T-cell (primary cell): ENCODE measurements at regions of chr11 and their contacts with region 1.

Region 1: DNA sequence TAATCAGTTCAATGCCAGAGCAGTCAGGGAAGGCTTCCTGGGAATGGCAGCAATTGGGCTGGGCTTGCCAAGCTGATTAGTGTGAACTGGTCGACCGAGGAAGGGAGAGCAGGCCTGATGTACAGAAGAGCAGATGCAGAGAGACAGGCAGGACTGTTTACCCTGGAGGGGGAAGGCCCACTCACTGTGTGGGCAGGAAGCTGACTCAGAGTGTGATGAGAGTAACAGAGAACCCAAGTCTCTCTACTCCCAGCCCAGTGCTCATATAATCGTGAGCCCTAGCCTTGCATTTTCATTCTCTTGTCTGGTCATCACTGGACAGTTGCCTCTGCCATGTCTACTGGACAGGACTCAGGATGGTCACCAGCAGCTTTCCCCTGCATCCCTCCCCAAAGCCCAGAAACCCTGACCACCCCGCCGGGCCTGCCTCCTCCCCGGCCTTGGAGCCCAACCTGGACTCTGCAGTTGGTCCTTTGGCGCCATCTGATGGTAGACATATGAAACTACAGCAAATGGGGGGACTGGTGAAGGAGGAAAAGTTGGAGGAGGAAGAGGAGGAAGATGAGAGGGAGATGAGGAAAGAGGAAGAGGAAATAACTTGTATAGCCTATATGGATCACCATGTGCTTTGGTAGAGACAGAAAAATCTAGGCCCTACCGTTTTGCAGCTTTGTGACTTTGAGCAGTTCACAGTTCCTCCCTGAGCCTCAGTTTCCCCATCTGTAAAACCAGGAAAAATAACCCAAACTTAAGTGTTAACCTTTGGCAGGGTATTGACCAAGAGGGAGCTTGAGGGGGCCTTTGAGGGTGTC is 43.4 kb upstream of the PRDM11 start:
- DNase-seq: peak in 34 of 35 experiments; percentile 21 to 83 (median 46)
- ATAC-seq: peak; percentile 89 to 99 (median 98)
- H3K4me3 ChIP-seq: peak overlapping the region in 1 of 2 donors; percentile 21
- H3K4me3 Mint-ChIP-seq: peak overlapping the region; percentile 4 to 77 (median 71)
- H3K27ac ChIP-seq: peak overlapping the region; percentile 58
- H3K27ac Mint-ChIP-seq: peak overlapping the region; percentile 18 to 56
- H3K4me1 ChIP-seq: peaks cover 0 to 18% of the 10 kb centered on the region in 2 experiments
- H3K4me1 Mint-ChIP-seq: peaks cover 12 to 32% (median 14%) of the 10 kb centered on the region in 3 donors
- H3K27me3 ChIP-seq: peaks cover 0 to 24% of the 10 kb centered on the region in 2 experiments
- H3K27me3 Mint-ChIP-seq: peaks cover 0 to 2% of the 10 kb centered on the region in 2 donors

Region 2: DNA sequence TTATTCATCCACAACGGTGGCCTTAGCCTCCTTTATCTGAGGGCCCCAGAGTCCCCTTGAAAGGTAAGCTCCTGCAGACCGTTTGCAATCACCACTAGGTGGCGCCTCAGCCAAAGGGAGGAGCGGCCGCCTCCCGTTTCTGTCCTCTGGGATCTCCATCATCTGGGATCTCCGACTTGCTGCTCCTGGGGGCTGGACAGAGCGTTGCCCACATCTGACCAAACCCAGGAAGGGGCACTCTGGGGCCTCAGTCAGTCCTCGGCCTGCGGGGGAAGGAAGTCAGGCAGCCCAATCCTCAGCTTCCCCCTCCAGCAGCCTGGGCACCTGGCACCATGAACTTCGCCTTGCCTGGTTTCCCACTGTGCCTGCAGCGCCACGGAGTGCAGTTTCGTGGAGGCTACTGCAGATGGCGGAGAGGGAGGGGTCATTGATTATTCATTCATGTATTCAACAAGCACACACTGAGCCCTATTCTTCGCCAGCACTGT is 175.8 kb before region 1 on chr11:
- CTCF ChIA-PET with region 1: interaction called, 27 to 39 read pairs
- POLR2A ChIA-PET with region 1: no interaction called
- DNase-seq: peak in 28 of 35 experiments; percentile 11 to 74 (median 41)
- ATAC-seq: peak in 3 of 4 experiments; percentile 62 to 71 (median 64)
- H3K4me3 ChIP-seq: no peak overlapping the region
- H3K4me3 Mint-ChIP-seq: no peak overlapping the region
- H3K27ac ChIP-seq: no peak overlapping the region
- H3K27ac Mint-ChIP-seq: no peak overlapping the region
- H3K4me1 ChIP-seq: peaks cover 0 to 3% of the 10 kb centered on the region in 2 experiments
- H3K4me1 Mint-ChIP-seq: peaks cover 2 to 10% (median 2%) of the 10 kb centered on the region in 3 donors
- H3K27me3 ChIP-seq: peaks cover 0 to 3% of the 10 kb centered on the region in 2 experiments
- H3K27me3 Mint-ChIP-seq: no peaks in the 10 kb centered on the region

Region 3: DNA sequence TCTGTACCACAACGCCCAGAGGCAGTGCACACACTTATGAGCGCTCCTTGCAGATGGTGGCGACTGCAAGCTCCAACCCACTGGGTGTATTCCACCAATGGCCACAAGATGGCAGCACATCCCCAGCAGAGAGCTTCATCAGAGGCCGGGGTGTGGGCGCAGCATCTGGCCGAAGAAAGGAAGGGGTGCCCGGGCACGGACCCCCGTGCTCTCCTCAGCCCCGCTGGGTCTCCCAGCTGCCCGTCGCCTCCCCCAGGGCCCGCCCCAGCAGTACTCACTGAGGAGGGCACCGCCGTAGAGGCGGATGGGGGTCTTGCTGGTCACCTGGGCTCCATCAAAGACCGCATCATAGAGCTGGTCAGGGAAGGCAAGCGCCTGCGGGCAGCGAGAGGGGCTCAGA is 166.5 kb before region 1 on chr11:
- CTCF ChIA-PET with region 1: interaction called, 135 to 179 read pairs
- POLR2A ChIA-PET with region 1: no interaction called
- DNase-seq: peak; percentile 40 to 90 (median 74)
- ATAC-seq: peak; percentile 83 to 88 (median 86)
- H3K4me3 ChIP-seq: no peak overlapping the region
- H3K4me3 Mint-ChIP-seq: no peak overlapping the region
- H3K27ac ChIP-seq: no peak overlapping the region
- H3K27ac Mint-ChIP-seq: no peak overlapping the region
- H3K4me1 ChIP-seq: peaks cover 0 to 7% of the 10 kb centered on the region in 2 experiments
- H3K4me1 Mint-ChIP-seq: peaks cover 0 to 16% (median 2%) of the 10 kb centered on the region in 3 donors
- H3K27me3 ChIP-seq: no peaks in the 10 kb centered on the region
- H3K27me3 Mint-ChIP-seq: no peaks in the 10 kb centered on the region

Region 4: DNA sequence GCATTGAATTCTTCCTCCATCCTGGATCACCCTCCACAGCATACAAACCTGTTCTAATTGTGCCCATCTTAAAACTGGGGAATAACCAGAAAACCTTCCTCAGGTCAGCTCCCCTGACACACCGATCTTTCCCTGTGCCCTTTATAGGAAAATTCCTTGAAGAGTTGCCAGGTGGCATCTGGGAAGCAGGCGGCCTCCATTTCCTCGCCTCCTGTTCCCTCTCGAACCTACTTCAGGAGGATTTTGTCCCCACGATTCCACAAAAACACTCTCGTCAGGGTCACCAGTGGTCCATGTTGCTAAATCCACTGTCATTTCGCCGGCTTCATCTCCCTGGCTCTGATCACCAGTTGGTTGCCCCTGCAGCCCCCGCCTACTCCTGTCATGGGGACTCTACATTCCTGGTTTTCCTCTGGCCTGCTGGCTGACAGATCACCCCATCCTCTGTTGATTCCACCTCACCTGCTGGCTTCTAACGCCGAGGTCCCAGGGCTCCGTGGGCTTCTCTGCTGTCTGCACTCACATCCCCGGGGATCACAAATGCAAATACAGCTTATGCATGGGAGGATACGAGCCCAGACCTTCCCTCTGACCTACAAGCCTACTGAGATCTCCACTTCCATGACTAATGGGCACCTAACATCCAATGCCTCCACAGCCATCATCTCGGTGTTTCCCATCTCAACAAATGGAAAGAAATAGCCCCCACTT is 49.1 kb before region 1 on chr11:
- CTCF ChIA-PET with region 1: interaction called in 1 of 2 experiments, 10 read pairs
- POLR2A ChIA-PET with region 1: no interaction called
- DNase-seq: no peak
- ATAC-seq: no peak
- H3K4me3 ChIP-seq: no peak overlapping the region
- H3K4me3 Mint-ChIP-seq: no peak overlapping the region
- H3K27ac ChIP-seq: no peak overlapping the region
- H3K27ac Mint-ChIP-seq: no peak overlapping the region
- H3K4me1 ChIP-seq: no peaks in the 10 kb centered on the region
- H3K4me1 Mint-ChIP-seq: no peaks in the 10 kb centered on the region
- H3K27me3 ChIP-seq: peaks cover 0 to 10% of the 10 kb centered on the region in 2 experiments
- H3K27me3 Mint-ChIP-seq: peaks cover 0 to 6% of the 10 kb centered on the region in 2 donors

Region 5: DNA sequence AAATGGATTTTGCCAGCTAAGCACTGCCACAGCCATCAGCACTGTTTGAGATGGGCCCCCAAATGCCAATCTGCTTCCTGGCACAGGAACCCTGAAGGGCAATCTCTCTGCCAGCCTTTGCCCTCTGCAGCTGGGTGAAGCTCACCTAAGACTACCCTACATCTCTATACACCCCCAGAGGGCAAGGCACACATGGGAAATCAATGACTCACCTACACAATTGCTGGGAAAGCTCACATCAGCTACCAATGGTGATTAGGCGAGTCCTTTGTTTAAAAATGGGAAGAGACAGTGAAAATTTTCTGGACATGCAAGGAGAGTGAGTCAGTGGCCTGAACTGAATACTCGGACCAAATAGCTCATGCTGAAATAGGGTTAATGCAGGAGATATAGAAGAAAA is 30.9 kb after region 1 on chr11:
- CTCF ChIA-PET with region 1: no interaction called
- POLR2A ChIA-PET with region 1: no interaction called
- DNase-seq: no peak
- ATAC-seq: no peak
- H3K4me3 ChIP-seq: no peak overlapping the region
- H3K4me3 Mint-ChIP-seq: no peak overlapping the region
- H3K27ac ChIP-seq: no peak overlapping the region
- H3K27ac Mint-ChIP-seq: no peak overlapping the region
- H3K4me1 ChIP-seq: no peaks in the 10 kb centered on the region
- H3K4me1 Mint-ChIP-seq: no peaks in the 10 kb centered on the region
- H3K27me3 ChIP-seq: peaks cover 2 to 5% of the 10 kb centered on the region in 2 experiments
- H3K27me3 Mint-ChIP-seq: peaks cover 45% of the 10 kb centered on the region in 2 donors

Region 6: DNA sequence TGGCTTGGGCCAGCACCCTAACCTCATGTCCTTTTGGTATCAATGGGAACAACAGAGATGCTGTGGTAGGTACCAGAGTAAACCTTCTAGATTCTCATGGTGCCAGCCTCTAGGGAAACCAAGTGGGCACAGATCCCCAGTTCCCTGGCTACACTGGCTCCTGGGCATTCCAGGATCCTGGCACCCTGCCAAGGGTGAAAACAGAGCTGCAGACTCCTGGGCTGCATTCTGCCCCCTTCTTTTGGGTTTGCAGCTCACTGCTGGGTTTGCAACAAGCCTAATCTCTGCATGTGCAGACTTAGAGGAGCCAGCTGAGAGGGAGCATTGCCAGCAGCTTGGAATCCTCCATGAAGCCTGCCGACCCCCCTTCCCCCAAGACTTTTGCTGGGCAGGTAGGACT is 74.0 kb after region 1 on chr11:
- CTCF ChIA-PET with region 1: no interaction called
- POLR2A ChIA-PET with region 1: no interaction called
- DNase-seq: no peak
- ATAC-seq: no peak
- H3K4me3 ChIP-seq: no peak overlapping the region
- H3K4me3 Mint-ChIP-seq: no peak overlapping the region
- H3K27ac ChIP-seq: no peak overlapping the region
- H3K27ac Mint-ChIP-seq: no peak overlapping the region
- H3K4me1 ChIP-seq: peaks cover 0 to 17% of the 10 kb centered on the region in 2 experiments
- H3K4me1 Mint-ChIP-seq: peaks cover 15 to 19% (median 16%) of the 10 kb centered on the region in 3 donors
- H3K27me3 ChIP-seq: peaks cover 0 to 32% of the 10 kb centered on the region in 2 experiments
- H3K27me3 Mint-ChIP-seq: peaks cover 21 to 22% of the 10 kb centered on the region in 2 donors

Region 7: DNA sequence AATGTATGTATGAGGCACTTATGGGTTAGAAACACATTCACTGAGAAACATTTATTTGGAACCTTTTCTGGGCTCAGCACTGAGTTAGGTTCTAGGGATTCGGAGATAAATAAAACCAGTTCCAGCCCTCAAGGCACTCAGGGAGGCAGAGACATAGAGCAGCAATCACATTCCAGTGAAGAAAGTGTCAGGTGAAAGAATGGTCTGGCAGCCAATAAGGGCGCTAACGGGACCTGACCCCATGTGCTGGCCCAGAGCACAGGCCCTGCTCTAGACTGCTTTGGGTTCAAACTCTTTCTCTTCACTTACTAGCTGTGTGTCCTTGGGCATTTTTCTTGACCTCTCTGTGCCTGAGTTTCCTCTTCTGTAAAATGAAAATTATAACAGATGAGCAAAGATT is 329.1 kb after region 1 on chr11:
- CTCF ChIA-PET with region 1: no interaction called
- POLR2A ChIA-PET with region 1: interaction called in 1 of 2 experiments, 12 read pairs
- DNase-seq: no peak
- ATAC-seq: no peak
- H3K4me3 ChIP-seq: no peak overlapping the region
- H3K4me3 Mint-ChIP-seq: no peak overlapping the region
- H3K27ac ChIP-seq: no peak overlapping the region
- H3K27ac Mint-ChIP-seq: no peak overlapping the region
- H3K4me1 ChIP-seq: no peaks in the 10 kb centered on the region
- H3K4me1 Mint-ChIP-seq: no peaks in the 10 kb centered on the region
- H3K27me3 ChIP-seq: peaks cover 0 to 10% of the 10 kb centered on the region in 2 experiments
- H3K27me3 Mint-ChIP-seq: peaks cover 24 to 25% of the 10 kb centered on the region in 2 donors